Vagina (tissue), 2 donors: ENCODE measurements at regions of chr7 and their contacts with region 1.

Region 1: DNA sequence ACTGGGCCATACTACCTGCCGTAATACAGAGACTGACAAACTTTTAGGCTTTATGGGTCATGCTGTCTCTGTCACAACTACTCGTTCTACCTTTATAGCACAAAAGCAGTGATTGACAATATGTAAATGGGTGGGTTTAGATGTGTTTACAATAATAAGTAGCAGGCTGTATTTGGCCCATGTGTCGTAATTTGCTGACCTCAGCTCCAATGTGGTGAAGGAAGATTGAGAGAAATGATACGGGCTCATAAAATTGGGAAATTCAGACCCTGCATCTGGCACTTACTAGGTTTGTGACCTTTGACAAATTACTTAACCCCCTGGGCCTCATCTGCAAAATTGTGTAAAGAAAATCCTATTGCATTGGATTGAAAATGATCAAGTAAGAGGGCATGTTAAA is 150.8 kb upstream of the NPSR1 start:
- DNase-seq: no peak
- H3K4me3 ChIP-seq: no peak overlapping the region
- H3K27ac ChIP-seq: no peak overlapping the region
- H3K4me1 ChIP-seq: no peaks in the 10 kb centered on the region
- H3K27me3 ChIP-seq: no peaks in the 10 kb centered on the region
- CTCF ChIP-seq: no peak
- POLR2A ChIP-seq: no peak

Region 2: GRCh38 chr7:33145156-33145555 is 1362.0 kb before region 1 on chr7:
- intact Hi-C with region 1: loop called (anchors 5 kb)
- DNase-seq: no peak
- H3K4me3 ChIP-seq: no peak overlapping the region
- H3K27ac ChIP-seq: no peak overlapping the region
- H3K4me1 ChIP-seq: no peaks in the 10 kb centered on the region
- H3K27me3 ChIP-seq: no peaks in the 10 kb centered on the region
- CTCF ChIP-seq: no peak
- POLR2A ChIP-seq: no peak

Region 3: DNA sequence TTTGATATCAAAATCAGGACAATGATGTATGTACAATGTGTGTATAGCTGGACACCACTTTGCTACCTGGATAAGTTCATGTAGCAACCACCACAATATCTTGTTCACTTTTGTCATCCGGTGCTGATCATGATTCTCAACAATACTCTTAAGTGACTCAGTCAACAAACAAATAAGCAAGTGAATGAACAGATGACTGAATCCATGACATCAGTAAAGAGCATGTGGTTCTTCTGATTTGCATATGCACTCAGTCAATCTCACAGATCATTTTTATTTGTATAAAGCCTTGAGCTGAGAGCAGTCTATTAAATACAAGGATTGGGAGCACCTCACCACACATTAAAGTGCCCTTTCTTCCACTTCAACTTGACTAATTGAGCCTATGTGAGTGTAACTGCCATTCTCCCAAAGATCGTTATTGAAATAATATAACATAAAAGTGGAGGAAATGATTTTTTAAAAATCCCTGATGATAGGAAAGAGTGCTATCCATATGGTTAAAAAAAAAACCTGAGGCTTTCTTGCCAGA is 220.3 kb after region 1 on chr7:
- intact Hi-C with region 1: no loop called
- DNase-seq: no peak
- H3K4me3 ChIP-seq: no peak overlapping the region
- H3K27ac ChIP-seq: no peak overlapping the region
- H3K4me1 ChIP-seq: no peaks in the 10 kb centered on the region
- H3K27me3 ChIP-seq: no peaks in the 10 kb centered on the region
- CTCF ChIP-seq: no peak
- POLR2A ChIP-seq: no peak